AG04450 (cell line): ENCODE measurements at regions of chr2 and their contacts with region 1.

Region 1: DNA sequence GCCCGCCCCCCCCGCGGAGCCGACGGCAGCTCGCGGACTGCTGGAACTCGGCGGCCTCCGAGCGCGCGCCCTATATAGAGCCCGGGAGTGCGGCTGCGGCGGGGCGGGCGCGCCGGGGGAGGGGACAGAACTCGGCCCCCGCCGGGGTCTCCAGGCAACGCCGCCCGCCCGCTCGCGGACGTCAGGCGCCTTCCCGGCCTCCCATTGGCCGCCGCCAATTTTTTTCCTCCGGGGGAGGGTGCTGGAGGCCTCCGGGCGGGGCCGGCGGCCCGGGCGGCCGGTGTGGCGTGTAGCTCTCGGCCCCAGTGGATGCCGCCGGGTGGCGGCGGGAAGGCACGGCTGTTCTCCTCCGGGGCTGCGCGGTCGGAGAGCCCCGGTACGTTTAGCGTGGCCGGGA is at the start of gene ZFP36L2:
- DNase-seq: peak; percentile 83
- H3K4me3 ChIP-seq: peak within 1 kb of the TSS; percentile 87
- H3K27ac ChIP-seq: peak within 1 kb of the TSS; percentile 95
- H3K27me3 ChIP-seq: no peaks in the 10 kb centered on the region
- CTCF ChIP-seq: no peak
- polyA plus RNA-seq, gene ZFP36L2: 16.0 and 18.2 TPM in 2 replicates

Region 2: GRCh38 chr2:42828487-42829425 is 397.8 kb before region 1 on chr2:
- CTCF ChIA-PET with region 1: interaction called, 35 read pairs
- POLR2A ChIA-PET with region 1: no interaction called
- DNase-seq: no peak
- H3K4me3 ChIP-seq: no peak overlapping the region
- H3K27ac ChIP-seq: no peak overlapping the region
- H3K27me3 ChIP-seq: no peaks in the 10 kb centered on the region
- CTCF ChIP-seq: peak; percentile 87

Region 3: DNA sequence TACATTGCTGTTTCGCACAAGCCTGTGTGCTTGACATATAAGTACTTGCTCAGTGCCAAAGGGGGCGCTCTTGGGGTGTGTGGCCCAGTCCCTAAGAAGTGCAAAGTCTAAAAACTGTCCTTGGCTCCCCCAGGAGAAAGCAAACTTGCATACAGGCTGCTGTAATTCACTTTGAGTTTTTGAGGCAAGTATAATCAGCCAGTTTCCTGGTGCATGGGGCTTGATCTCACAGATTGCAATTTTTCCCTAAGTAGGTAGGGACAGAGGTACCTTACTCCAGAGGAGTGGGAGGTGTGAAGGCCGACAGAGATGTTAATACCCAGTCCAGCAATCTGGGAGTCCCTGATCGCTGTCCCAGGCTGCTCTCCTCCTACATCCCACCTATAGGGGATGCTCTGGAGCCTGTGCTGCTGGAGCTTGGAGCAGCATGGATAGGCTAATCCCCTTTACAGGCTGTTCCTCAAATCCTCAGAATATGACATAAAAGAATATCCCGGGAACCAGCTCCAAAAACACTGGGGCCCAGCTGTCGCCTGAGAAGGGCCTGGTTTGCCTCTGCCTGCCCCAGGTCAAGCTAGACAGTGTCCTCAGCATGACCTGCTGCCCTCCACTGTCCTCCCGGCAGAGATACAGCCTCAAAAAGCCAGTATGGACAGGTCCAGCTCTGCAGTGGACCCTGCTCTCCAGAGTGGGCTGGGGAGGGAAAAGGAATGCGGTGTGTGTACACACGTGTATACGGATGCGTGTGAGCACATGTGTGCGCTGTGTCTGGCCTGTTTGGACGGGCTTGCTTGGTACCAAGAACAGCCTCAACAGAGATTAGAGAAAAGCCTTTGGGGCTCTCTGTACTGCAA is 297.6 kb before region 1 on chr2:
- CTCF ChIA-PET with region 1: interaction called, 10 read pairs
- POLR2A ChIA-PET with region 1: interaction called, 3 read pairs
- DNase-seq: no peak
- H3K4me3 ChIP-seq: no peak overlapping the region
- H3K27ac ChIP-seq: peak overlapping the region; percentile 80
- H3K27me3 ChIP-seq: no peaks in the 10 kb centered on the region
- CTCF ChIP-seq: peak; percentile 58

Region 4: DNA sequence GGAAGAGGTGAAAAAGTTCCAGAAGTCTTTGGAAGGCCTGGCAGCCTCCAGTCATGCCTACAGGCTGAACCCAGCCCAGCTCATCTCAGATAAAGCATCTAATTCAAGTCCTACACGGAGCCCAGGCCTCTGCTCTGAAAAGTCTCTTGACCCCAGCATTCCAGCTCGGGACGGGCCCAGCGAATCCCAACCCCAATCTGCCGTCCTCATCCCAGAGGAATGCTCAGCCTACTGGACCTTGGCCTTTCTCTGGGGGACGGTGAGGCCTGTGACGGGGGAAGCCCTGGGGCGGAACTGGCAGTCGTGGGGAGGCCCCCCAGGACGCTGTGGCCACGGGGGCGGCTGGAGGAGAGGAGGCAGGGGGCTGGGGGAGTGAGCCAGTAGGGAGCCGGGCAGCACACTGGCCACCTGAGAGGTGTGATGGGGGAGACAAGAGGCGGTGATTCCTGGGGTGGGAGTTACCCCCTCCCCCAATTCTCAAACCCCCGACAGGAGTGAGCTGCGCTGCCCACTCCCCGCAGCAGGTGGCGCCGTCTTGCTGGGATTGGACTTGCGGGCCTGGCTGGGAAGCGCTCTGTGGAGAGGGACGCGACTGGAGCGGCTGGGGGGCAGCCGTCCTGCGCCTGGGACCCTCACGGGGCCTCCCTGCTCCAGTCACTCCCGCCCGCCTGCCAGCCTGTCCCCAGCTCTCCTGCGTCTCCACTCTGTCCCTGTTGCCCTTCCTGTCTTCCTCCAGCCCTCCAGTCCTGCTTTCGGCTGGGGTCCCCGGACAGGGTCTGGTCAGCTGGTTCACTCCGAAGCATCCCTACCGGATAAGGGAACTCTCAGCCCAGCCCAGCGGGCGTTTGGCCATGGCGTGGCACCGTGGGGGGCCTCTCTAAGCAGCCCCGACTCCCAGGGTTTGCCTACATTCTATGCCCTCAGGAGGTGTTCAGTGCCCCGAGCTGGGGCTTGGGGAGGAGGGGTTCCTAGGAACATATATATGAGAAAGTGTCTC is 251.5 kb before region 1 on chr2:
- CTCF ChIA-PET with region 1: interaction called, 32 read pairs
- POLR2A ChIA-PET with region 1: interaction called, 15 read pairs
- DNase-seq: no peak
- H3K4me3 ChIP-seq: peak overlapping the region; percentile 47
- H3K27ac ChIP-seq: peak overlapping the region; percentile 47
- H3K27me3 ChIP-seq: no peaks in the 10 kb centered on the region
- CTCF ChIP-seq: peak; percentile 95

Region 5: DNA sequence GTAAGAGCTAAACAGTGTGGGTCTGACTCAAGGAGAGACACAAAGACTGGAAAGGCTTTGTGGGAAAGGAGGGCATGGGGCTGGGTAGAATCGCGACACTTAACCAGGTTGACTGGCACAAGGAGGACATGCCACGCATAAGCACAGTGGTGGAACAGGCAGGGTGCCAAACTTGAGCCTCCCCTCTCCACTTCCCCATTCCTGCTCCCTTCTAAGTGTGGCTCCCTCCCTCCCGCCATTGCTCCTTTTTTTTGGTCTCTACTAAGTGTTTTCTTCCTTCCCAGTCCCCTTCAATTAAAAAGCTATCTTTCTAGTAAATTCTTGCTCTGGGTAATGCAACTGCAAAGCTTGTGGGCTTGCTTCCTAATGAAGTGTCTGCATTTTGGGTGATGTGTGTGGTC is 40.2 kb after region 1 on chr2:
- CTCF ChIA-PET with region 1: interaction called, 12 read pairs
- POLR2A ChIA-PET with region 1: interaction called, 8 read pairs
- DNase-seq: no peak
- H3K4me3 ChIP-seq: no peak overlapping the region
- H3K27ac ChIP-seq: no peak overlapping the region
- H3K27me3 ChIP-seq: no peaks in the 10 kb centered on the region
- CTCF ChIP-seq: no peak

Region 6: GRCh38 chr2:43461453-43462073 is 235.0 kb after region 1 on chr2:
- CTCF ChIA-PET with region 1: interaction called, 11 read pairs
- POLR2A ChIA-PET with region 1: interaction called, 3 read pairs
- DNase-seq: no peak
- H3K4me3 ChIP-seq: no peak overlapping the region
- H3K27ac ChIP-seq: no peak overlapping the region
- H3K27me3 ChIP-seq: no peaks in the 10 kb centered on the region
- CTCF ChIP-seq: no peak

Region 7: DNA sequence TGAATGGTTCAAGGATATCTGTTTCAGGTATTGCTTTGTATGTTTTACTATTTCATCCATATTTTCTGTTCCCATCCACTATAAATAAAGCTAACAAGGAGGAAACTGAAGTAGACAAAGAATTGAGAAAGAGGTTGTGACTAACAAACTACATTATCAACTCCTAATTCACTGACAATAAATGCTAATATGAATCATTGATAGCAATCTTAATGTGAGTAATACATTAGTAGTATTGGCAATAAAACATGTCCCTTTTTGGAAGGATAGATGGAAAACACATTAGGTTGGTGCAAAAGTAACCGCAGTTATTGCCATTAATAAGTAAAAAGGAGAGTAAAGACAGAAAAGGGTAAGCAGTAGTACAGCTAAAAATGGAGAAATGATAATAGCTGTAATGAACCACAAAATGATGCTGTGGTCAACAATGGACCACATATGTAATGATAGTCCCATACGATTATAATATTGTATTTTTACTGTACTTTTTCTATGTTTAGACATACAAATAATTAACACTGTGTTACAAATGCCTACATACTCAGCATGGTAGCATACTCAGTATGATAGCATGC is 264.6 kb after region 1 on chr2:
- CTCF ChIA-PET with region 1: interaction called, 104 read pairs
- POLR2A ChIA-PET with region 1: no interaction called
- DNase-seq: no peak
- H3K4me3 ChIP-seq: no peak overlapping the region
- H3K27ac ChIP-seq: no peak overlapping the region
- H3K27me3 ChIP-seq: no peaks in the 10 kb centered on the region
- CTCF ChIP-seq: no peak

Region 8: GRCh38 chr2:43622931-43623451 is 396.4 kb after region 1 on chr2:
- CTCF ChIA-PET with region 1: no interaction called
- POLR2A ChIA-PET with region 1: no interaction called
- DNase-seq: no peak
- H3K4me3 ChIP-seq: no peak overlapping the region
- H3K27ac ChIP-seq: no peak overlapping the region
- H3K27me3 ChIP-seq: peaks cover 15% of the 10 kb centered on the region
- CTCF ChIP-seq: no peak

Region 9: GRCh38 chr2:43831543-43832294 is 605.2 kb after region 1 on chr2:
- CTCF ChIA-PET with region 1: no interaction called
- POLR2A ChIA-PET with region 1: no interaction called
- DNase-seq: no peak
- H3K4me3 ChIP-seq: peak overlapping the region; percentile 13; the same call in 1 of the 2 replicates
- H3K27ac ChIP-seq: no peak overlapping the region
- H3K27me3 ChIP-seq: peaks cover 35% of the 10 kb centered on the region
- CTCF ChIP-seq: no peak